ENCODE measurements at regions of chr12 and their contacts with region 1.

Region 1: DNA sequence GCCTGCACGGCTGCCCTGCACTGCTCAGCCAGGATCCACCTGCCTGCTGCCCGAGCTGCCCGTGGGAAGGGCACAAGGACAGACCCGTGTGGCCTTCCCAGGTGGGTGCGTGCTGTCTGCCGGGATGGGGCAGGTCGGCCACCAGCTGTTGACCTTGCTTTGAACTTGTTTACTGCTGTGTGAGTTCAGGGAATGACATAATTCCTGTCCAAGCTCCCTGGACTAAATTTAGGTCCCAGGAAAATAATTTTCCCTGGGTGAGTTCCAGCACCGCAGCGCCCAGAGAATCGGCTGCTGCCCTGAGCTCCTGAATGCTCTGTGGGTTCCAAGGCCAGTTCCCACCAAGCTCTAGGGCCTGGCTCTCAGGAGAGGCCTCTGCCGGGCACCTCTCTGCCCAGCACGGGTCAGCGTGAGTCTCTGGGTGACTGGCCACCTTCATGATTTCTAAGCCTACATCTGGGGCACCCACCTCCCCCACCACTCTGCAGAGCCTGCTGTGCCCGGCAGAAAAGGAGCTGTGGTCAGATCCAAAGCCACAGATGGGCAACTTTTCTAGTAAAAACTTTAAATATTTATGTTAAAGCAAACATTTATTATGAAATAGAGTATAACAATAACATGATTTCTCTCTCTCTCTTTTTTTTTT is 27.2 kb upstream of the MLXIP start:
- DNase-seq: no peak
- ATAC-seq: peak; percentile 8 to 18
- H3K4me3 ChIP-seq: no peak overlapping the region
- H3K27ac ChIP-seq: peak overlapping the region; percentile 46
- H3K4me1 ChIP-seq: peaks cover 15% of the 10 kb centered on the region
- H3K27me3 ChIP-seq: no peaks in the 10 kb centered on the region
- CTCF ChIP-seq: no peak

Region 2: DNA sequence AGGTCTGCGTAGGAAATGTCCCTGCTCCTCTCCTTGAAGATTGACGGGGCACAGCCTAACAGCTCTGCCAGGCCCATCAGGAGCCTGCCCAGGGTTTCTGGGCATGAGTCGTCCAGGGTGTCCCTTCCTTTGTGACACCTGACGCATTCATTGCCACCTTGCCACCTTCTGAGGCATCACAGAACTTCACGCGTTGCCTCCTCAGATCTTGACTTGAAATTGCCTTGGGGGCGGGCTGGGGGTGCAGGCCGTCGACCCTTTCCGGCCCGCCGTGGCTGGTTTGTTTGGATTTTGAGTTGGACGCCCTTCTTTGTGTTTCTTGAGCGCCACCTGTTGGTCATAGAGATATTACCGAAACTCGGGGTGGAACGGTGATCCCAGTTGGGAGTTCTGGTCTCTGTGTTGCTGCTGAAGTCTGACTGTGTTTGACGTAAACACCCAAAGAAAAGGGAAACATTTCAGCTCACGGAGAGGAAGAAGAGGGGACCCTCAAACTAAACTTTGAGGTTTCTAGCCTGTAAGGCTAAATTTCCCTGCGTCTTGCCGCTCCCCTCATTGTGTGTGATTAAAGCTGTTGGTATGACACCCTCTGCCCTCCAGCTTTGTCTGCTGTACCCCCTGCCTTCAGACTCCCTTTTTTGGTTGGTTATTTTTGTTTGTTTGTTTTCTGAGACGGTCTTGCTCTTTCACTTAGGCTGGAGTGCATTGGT is 71.9 kb after region 1 on chr12:
- intact Hi-C with region 1: loop called (anchors 10 kb)
- DNase-seq: peak; percentile 53
- ATAC-seq: peak; percentile 65 to 73
- H3K4me3 ChIP-seq: no peak overlapping the region
- H3K27ac ChIP-seq: peak overlapping the region; percentile 19
- H3K4me1 ChIP-seq: peaks cover 42% of the 10 kb centered on the region
- H3K27me3 ChIP-seq: no peaks in the 10 kb centered on the region
- CTCF ChIP-seq: peak; percentile 74